OCI-LY7 (cell line): ENCODE measurements at regions of chr20 and their contacts with region 1.

Region 1: DNA sequence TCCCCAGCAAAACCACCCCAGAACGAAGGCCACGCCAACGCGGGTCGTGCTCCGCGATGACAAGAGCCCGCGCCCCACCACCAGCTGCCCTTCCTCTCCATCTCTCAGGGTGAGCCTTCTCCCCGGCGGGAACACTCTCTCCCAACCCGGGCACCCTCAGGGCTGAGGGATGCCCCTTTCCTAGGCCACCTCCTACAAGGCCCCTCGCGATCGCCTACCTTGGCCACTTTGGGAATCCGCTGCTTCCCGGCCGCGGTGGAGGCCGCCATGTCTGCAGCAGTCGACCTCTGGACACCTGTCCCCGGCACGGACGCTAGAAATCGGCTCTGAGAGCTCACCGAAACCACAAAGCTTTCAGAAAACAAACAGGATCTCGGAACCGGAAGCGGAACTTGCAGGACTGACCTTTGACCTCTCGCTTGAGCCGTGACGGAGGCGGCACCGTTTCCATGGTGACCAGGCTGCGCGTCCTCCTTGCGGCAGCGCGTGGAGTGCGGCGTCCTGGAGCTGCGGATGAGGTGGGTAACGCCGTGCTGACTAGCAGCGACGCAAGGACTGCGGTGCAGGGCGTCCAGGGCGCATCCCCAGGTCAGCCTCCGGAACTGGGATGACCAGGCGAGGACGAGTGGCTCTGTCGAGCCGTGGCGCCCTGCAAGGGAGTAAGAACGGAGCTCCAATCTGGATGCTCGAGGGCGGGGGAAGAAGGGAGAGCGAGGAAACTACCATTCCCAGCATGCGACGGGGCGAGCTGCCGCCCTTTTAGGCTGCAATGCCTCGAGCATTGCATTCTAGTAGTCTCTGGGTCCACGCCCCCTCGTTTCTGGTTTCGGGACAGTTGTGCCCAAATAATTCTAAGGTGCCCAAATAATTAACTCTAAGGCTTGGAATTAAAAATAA is at the starts of genes CFAP61 and CRNKL1:
- DNase-seq: peak; percentile 98
- H3K4me3 ChIP-seq: peak within 1 kb of the TSS; percentile 98
- H3K27ac ChIP-seq: peak within 1 kb of the TSS; percentile 60
- H3K4me1 ChIP-seq: peaks cover 13% of the 10 kb centered on the region
- CTCF ChIP-seq: no peak
- total RNA-seq, gene CFAP61: 0.06 TPM in 1 of 2 replicates, not detected in the other
- total RNA-seq, gene CRNKL1: 13.9 and 18.6 TPM in 2 replicates

Region 2: GRCh38 chr20:20017001-20017843 is 35.1 kb before region 1 on chr20 and contains the start of gene NAA20:
- CTCF ChIA-PET with region 1: no interaction called
- POLR2A ChIA-PET with region 1: interaction called, 23 read pairs
- intact Hi-C with region 1: loop called (anchors 1 kb)
- DNase-seq: peak; percentile 92
- H3K4me3 ChIP-seq: peak within 1 kb of the TSS; percentile 96
- H3K27ac ChIP-seq: peak within 1 kb of the TSS; percentile 51
- H3K4me1 ChIP-seq: peaks cover 33% of the 10 kb centered on the region
- CTCF ChIP-seq: peak; percentile 65
- total RNA-seq, gene NAA20: 37.5 and 44.6 TPM in 2 replicates

Region 3: GRCh38 chr20:20027284-20027683 is 25.0 kb before region 1 on chr20:
- CTCF ChIA-PET with region 1: no interaction called
- POLR2A ChIA-PET with region 1: interaction called, 20 read pairs
- intact Hi-C with region 1: no loop called
- DNase-seq: no peak
- H3K4me3 ChIP-seq: no peak overlapping the region
- H3K27ac ChIP-seq: no peak overlapping the region
- H3K4me1 ChIP-seq: no peaks in the 10 kb centered on the region
- CTCF ChIP-seq: no peak